ENCODE measurements at regions of chr22 and their contacts with region 1.

Region 1: GRCh38 chr22:29275819-29276565 is 7.9 kb downstream of the EWSR1 start:
- DNase-seq: no peak
- ATAC-seq: no peak
- H3K4me3 ChIP-seq: no peak overlapping the region
- H3K27ac ChIP-seq: no peak overlapping the region
- H3K4me1 ChIP-seq: peaks cover 1% of the 10 kb centered on the region; the same call in 1 of the 2 replicates
- H3K27me3 ChIP-seq: no peaks in the 10 kb centered on the region
- CTCF ChIP-seq: no peak
- POLR2A ChIP-seq: no peak
- RAD21 ChIP-seq: no peak

Region 2: DNA sequence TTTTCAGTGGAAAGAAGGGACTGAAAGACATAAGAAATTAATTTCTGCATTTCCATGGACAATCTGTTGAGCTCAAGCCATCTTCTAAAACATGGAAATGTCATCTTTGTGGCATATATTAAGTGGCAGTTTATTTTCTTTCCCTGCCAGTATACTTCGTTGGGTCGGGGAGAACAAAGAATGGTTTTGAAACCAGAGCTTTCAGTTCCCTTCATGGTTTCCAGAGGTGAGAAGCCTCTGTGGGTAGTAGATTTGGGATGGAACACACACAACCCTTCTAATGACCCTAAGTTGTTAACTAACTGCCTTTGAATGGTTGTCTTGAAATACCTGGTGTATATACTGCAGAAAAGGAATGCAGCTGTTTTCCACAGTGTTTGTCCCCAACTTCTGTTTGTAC is 12.8 kb after region 1 on chr22:
- CTCF ChIA-PET with region 1: no interaction called
- POLR2A ChIA-PET with region 1: no interaction called
- dilution Hi-C with region 1: no loop called
- in situ Hi-C with region 1: no loop called
- intact Hi-C with region 1: loop called (anchors 2 kb)
- DNase-seq: no peak
- ATAC-seq: no peak
- H3K4me3 ChIP-seq: no peak overlapping the region
- H3K27ac ChIP-seq: no peak overlapping the region
- H3K4me1 ChIP-seq: no peaks in the 10 kb centered on the region
- H3K27me3 ChIP-seq: no peaks in the 10 kb centered on the region
- CTCF ChIP-seq: no peak
- POLR2A ChIP-seq: no peak
- RAD21 ChIP-seq: no peak

Region 3: DNA sequence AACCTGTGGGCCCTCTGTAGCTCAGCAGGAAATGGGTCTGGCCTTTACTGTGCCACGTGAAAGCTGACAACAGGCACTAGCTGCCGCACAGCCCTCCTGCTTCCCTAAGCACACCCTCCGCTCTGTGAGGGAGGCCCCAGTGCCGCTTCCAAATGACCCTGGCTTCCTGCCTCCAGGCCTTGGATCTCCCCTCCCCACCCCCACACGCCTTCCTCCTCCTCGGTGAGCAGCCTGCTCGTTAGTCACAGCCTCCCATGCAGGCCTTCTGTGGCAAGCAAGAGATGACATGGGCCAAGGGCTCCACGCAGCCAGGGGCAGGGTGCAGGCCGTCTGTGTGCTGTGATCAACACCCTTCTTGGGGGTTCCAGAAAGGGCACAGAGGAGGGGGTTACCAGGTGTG is 54.8 kb after region 1 on chr22:
- CTCF ChIA-PET with region 1: no interaction called
- POLR2A ChIA-PET with region 1: no interaction called
- dilution Hi-C with region 1: no loop called
- in situ Hi-C with region 1: no loop called
- intact Hi-C with region 1: no loop called
- DNase-seq: peak; percentile 77
- ATAC-seq: peak; percentile 75
- H3K4me3 ChIP-seq: no peak overlapping the region
- H3K27ac ChIP-seq: no peak overlapping the region
- H3K4me1 ChIP-seq: peaks cover 9% of the 10 kb centered on the region
- H3K27me3 ChIP-seq: no peaks in the 10 kb centered on the region
- CTCF ChIP-seq: no peak
- POLR2A ChIP-seq: no peak
- RAD21 ChIP-seq: no peak

Measured in IMR-90 (cell line).